ENCODE measurements at regions of chr3 and their contacts with region 1.

Region 1: DNA sequence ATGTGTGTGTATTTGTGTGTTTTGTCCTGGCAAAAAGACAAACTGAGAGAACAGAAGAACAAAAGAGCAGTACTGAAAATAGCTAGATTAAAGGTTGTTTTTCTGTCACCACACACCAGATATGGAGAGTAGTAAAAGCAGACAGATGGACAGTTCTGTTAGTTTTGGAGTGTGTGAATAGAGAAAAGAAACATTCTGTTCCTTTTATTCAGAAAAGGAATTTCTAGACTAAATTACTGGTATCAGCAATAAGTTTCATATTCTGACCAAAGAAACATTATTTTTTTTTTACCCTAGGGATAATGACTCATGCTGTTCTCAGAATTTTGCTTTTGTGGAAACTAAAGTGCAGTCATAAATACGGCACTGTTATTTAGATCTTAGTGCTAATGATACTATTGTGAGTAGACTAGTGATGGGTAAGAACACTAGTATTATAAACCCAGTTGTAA is 32.9 kb downstream of the PIK3CA start:
- DNase-seq: no peak
- H3K4me3 ChIP-seq: peak overlapping the region; percentile 15 to 35
- H3K27ac ChIP-seq: peak overlapping the region; percentile 76 to 86
- H3K4me1 ChIP-seq: peaks cover 18 to 49% of the 10 kb centered on the region in 2 donors
- H3K27me3 ChIP-seq: no peaks in the 10 kb centered on the region
- CTCF ChIP-seq: no peak

Region 2: DNA sequence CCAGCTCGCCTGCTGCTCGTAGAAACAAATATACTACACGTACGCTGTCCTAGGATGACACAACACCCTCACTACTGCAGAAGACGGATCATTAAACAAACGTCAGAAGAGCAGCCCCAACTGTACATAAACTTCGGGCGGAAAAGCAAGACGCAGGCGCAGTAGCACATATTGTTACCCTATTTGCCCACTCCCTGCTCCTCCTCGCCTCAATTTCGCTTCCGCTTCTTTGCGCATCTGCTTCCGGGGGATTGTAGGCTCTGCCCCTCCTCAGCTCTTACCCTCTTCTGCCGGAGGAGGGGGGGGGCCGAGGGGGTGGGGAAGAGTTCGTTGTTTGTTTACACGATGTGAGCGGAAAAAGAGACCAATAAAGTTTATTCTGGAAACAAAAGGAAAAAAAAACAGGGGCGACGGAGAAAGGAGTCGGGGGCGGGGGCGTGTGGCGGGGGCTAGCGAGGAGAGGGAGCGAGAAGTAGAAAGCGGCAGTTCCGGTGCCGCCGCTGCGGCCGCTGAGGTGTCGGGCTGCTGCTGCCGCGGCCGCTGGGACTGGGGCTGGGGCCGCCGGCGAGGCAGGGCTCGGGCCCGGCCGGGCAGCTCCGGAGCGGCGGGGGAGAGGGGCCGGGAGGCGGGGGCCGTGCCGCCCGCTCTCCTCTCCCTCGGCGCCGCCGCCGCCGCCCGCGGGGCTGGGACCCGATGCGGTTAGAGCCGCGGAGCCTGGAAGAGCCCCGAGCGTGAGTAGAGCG is 33.0 kb before region 1 on chr3 and contains the start of gene PIK3CA:
- intact Hi-C with region 1: loop called (anchors 1 kb)
- DNase-seq: peak; percentile 90 to 98
- H3K4me3 ChIP-seq: peak within 1 kb of the TSS; percentile 95 to 97
- H3K27ac ChIP-seq: peak within 1 kb of the TSS; percentile 93 to 99
- H3K4me1 ChIP-seq: peaks cover 0 to 14% of the 10 kb centered on the region in 2 donors
- H3K27me3 ChIP-seq: no peaks in the 10 kb centered on the region
- CTCF ChIP-seq: no peak
- total RNA-seq, gene PIK3CA: 12.7 TPM

Region 3: GRCh38 chr3:179196098-179196497 is 15.1 kb after region 1 on chr3:
- intact Hi-C with region 1: no loop called
- DNase-seq: no peak
- H3K4me3 ChIP-seq: no peak overlapping the region
- H3K27ac ChIP-seq: no peak overlapping the region
- H3K4me1 ChIP-seq: peaks cover 0 to 5% of the 10 kb centered on the region in 2 donors
- H3K27me3 ChIP-seq: no peaks in the 10 kb centered on the region
- CTCF ChIP-seq: no peak

Region 4: DNA sequence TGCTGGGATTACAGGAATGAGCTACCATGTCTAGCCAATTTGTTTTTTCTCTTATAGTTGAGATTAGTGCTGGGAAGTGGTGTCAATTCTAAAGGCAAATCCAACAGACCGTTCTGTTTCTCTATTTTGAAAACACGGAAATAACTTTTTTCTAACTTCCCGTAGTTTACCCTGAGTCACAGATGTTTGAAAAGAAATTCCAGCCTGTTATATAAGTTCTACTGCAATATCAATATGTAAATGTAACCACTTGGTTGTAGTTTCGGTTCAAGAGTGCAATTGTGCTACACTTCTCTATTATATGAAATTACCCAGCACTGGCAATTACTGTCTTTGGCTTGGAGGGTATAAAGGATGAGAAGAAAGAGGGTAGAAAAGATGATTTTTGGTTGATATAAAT is 292.5 kb after region 1 on chr3:
- intact Hi-C with region 1: no loop called
- DNase-seq: no peak
- H3K4me3 ChIP-seq: no peak overlapping the region
- H3K27ac ChIP-seq: no peak overlapping the region
- H3K4me1 ChIP-seq: no peaks in the 10 kb centered on the region
- H3K27me3 ChIP-seq: no peaks in the 10 kb centered on the region
- CTCF ChIP-seq: no peak

Region 5: GRCh38 chr3:179653096-179653797 is 472.2 kb after region 1 on chr3:
- intact Hi-C with region 1: loop called (anchors 10 kb)
- DNase-seq: peak in 1 of 2 donors; percentile 82
- H3K4me3 ChIP-seq: peak overlapping the region; percentile 90
- H3K27ac ChIP-seq: peak overlapping the region; percentile 88 to 92
- H3K4me1 ChIP-seq: no peaks in the 10 kb centered on the region
- H3K27me3 ChIP-seq: no peaks in the 10 kb centered on the region
- CTCF ChIP-seq: peak in 1 of 3 experiments; percentile 9

Measured in ascending aorta (tissue), 2 donors.